CD4-positive, alpha-beta T cell (primary cell): ENCODE measurements at regions of chr17 and their contacts with region 1.

Region 1: GRCh38 chr17:74873038-74873873 is 462 bp upstream of the FDXR start:
- DNase-seq: peak; percentile 98 to 100 (median 99)
- ATAC-seq: peak; percentile 94
- H3K4me3 ChIP-seq: peak overlapping the region; percentile 67
- H3K4me3 Mint-ChIP-seq: peak overlapping the region; percentile 90
- H3K27ac ChIP-seq: peak overlapping the region; percentile 89 to 92
- H3K27ac Mint-ChIP-seq: peak overlapping the region; percentile 92
- H3K4me1 ChIP-seq: peaks cover 25% of the 10 kb centered on the region
- H3K4me1 Mint-ChIP-seq: peaks cover 24% of the 10 kb centered on the region
- H3K27me3 ChIP-seq: no peaks in the 10 kb centered on the region
- H3K27me3 Mint-ChIP-seq: no peaks in the 10 kb centered on the region
- CTCF ChIP-seq: no peak

Region 2: GRCh38 chr17:74748529-74749365 is 124.5 kb before region 1 on chr17 and contains the start of gene NHERF1:
- CTCF ChIA-PET with region 1: no interaction called
- POLR2A ChIA-PET with region 1: interaction called, 10 read pairs
- intact Hi-C with region 1: no loop called
- DNase-seq: peak in 13 of 14 experiments; percentile 83 to 97 (median 94)
- ATAC-seq: peak; percentile 82
- H3K4me3 ChIP-seq: peak within 1 kb of the TSS; percentile 98
- H3K4me3 Mint-ChIP-seq: peak within 1 kb of the TSS; percentile 92
- H3K27ac ChIP-seq: peak within 1 kb of the TSS; percentile 48 to 84
- H3K27ac Mint-ChIP-seq: peak within 1 kb of the TSS; percentile 94
- H3K4me1 ChIP-seq: peaks cover 74% of the 10 kb centered on the region
- H3K4me1 Mint-ChIP-seq: peaks cover 74% of the 10 kb centered on the region
- H3K27me3 ChIP-seq: no peaks in the 10 kb centered on the region
- H3K27me3 Mint-ChIP-seq: no peaks in the 10 kb centered on the region
- CTCF ChIP-seq: no peak
- total RNA-seq, gene NHERF1: 68.4 to 72.4 TPM

Region 3: DNA sequence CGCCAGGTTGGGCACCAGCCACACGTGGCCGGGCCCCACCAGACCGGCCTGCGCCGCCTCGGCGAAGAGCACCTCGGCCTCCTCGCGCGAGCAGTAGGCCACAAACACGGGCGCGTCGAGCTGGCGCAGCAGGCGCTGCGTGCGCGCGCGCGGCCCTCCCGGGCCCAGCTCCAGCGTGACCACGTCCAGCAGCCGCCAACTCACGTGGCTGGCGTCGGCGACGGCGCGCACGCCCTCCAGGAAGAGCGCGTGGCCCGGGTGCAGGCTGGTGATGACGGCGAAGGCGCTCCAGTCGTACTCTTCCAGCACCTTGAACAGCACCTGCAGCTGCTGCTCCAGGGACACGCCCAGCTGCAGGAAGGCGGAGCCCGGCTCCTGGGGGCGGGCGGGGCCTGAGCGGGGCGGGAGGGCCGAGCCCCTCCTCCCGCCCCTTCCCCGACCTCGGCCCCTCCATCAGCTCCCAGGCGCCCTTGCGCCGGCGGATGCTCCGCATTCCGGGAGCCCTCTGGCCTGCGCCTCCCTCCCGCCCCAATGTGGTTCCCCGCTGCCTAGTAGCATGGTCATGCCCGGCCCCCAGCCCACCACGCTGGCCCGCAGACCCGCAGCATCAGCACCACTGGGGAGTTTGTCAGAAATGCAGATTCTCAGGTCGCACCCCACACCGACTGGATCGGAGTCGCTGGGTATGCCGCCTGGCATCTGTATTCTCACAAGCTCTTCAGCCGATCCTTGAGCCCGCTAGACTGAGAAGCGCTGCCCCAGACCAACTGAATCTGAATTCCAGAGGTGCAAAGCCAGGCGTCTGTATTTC is 20.8 kb before region 1 on chr17:
- CTCF ChIA-PET with region 1: interaction called, 3 read pairs
- POLR2A ChIA-PET with region 1: interaction called, 10 read pairs
- intact Hi-C with region 1: loop called (anchors 2 kb)
- DNase-seq: peak; percentile 48 to 87 (median 64)
- ATAC-seq: peak; percentile 95
- H3K4me3 ChIP-seq: peak overlapping the region; percentile 55
- H3K4me3 Mint-ChIP-seq: peak overlapping the region; percentile 82
- H3K27ac ChIP-seq: no peak overlapping the region
- H3K27ac Mint-ChIP-seq: no peak overlapping the region
- H3K4me1 ChIP-seq: peaks cover 8% of the 10 kb centered on the region
- H3K4me1 Mint-ChIP-seq: peaks cover 5% of the 10 kb centered on the region
- H3K27me3 ChIP-seq: peaks cover 30 to 54% of the 10 kb centered on the region in 2 experiments
- H3K27me3 Mint-ChIP-seq: peaks cover 50% of the 10 kb centered on the region
- CTCF ChIP-seq: no peak

Region 4: DNA sequence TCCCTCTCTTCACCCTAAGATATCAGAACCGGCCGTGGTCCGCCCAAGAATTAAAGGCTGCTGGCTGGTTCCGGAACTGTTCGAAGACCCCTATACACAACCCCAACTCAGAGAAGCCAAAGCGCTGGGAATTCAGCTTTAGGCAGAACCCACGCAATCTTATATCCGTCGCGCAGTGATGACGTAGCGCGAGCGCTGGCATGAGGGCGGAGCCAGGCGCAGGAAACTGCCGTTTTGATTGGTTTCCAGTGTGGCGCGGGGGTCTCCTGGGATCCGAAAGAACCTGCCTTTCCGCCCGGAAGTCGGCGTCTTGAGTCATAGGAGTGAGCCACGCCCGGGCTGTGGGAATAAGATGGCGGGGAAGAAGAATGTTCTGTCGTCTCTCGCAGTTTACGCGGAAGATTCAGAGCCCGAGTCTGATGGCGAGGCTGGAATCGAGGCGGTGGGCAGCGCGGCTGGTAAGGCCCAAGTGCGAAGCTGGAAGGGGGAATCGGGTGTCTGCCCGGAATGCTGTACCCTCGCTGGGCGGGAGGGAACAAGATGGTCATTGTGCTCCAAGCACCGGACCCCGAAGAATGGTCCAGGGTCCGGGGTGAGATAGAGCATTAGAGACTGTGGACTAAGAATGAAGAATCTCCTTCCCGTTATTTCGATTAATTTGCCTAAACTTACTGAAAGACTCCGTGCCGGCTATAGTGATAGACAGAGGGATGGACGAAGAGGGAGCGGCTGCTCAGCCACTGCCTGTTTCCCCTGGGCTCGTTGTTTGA is 794.0 kb after region 1 on chr17 and contains the starts of genes RECQL5 and SAP30BP:
- CTCF ChIA-PET with region 1: no interaction called
- POLR2A ChIA-PET with region 1: interaction called, 3 read pairs
- intact Hi-C with region 1: loop called in 1 of 2 experiments (anchors 5 kb)
- DNase-seq: peak; percentile 97 to 99 (median 98)
- ATAC-seq: peak; percentile 100
- H3K4me3 ChIP-seq: peak within 1 kb of the TSS; percentile 76
- H3K4me3 Mint-ChIP-seq: peak within 1 kb of the TSS; percentile 72
- H3K27ac ChIP-seq: peak within 1 kb of the TSS; percentile 87 to 90
- H3K27ac Mint-ChIP-seq: peak within 1 kb of the TSS; percentile 57
- H3K4me1 ChIP-seq: peaks cover 23% of the 10 kb centered on the region
- H3K4me1 Mint-ChIP-seq: peaks cover 26% of the 10 kb centered on the region
- H3K27me3 ChIP-seq: no peaks in the 10 kb centered on the region
- H3K27me3 Mint-ChIP-seq: no peaks in the 10 kb centered on the region
- CTCF ChIP-seq: no peak
- total RNA-seq, gene RECQL5: 16.4 to 17.7 TPM
- total RNA-seq, gene SAP30BP: 209 to 227 TPM